Ovary (tissue), 10 donors: ENCODE measurements at regions of chr10 and their contacts with region 1.

Region 1: DNA sequence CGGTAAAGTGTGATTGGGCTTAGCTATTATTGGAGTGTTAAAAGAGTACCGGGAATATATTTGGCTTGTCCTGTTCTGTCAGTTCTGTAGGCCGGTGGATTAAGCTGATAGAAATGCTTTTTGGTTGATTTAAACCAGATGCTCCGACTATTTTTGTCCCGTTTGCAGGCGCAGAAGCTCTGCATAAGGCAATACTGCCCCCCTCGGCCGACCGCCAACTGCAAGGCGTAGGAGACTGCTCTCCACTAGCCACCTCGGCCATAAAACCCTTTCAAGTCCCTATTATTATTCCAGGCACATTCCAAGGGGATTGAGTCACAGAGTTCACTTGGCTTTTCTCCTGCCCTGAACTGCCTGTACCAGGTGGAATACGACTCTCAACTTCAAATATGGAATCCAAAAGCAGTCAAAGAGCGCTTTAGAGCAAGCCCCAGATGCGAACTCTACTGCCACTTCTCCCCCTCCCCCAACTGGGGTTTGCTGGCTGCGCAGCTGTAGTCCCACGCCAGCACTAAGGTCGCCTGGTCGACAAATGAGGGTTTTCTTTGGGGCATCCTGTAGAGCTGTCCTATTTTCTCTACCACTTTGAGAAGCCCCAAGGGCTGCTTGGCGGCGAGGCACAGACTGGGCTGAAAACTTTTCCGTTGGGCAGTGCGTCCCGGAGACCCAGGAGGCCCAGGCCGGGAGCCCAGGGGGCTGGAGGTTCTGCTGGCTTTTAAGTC is 108.3 kb downstream of the REEP3 start:
- DNase-seq: peak; percentile 93 to 97 (median 97)
- H3K4me3 ChIP-seq: peak overlapping the region; percentile 57
- H3K27ac ChIP-seq: peak overlapping the region; percentile 87 to 92
- H3K4me1 ChIP-seq: peaks cover 7% of the 10 kb centered on the region
- H3K27me3 ChIP-seq: no peaks in the 10 kb centered on the region
- CTCF ChIP-seq: peak; percentile 66 to 76 (median 70)
- EP300 ChIP-seq: no peak
- POLR2A ChIP-seq: no peak

Region 2: DNA sequence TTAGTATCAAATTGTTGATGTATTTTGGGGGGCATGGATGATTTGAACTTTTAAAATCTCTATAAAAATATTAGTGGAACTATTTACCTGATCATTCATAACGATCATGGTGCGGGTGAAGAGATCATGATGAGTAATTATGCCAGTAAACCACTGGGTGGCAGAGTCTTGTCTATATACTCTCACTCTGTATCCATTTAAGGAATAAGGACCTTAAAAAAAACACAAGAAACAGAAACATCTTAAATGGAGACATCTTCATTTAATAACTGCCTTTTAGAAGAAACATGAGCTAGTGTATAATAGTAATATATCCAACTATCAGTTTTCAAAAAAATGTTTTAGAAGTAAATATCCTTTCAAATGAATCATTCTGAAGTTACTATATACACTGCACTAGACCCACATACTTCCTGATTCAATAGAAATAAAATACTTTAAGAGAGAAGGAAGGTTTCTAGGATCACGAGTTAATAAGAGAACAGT is 412.4 kb before region 1 on chr10:
- intact Hi-C with region 1: loop called in 2 of 4 experiments (anchors 10 kb)
- DNase-seq: no peak
- H3K4me3 ChIP-seq: no peak overlapping the region
- H3K27ac ChIP-seq: no peak overlapping the region
- H3K4me1 ChIP-seq: no peaks in the 10 kb centered on the region
- H3K27me3 ChIP-seq: no peaks in the 10 kb centered on the region
- CTCF ChIP-seq: peak; percentile 17 to 74 (median 69)
- EP300 ChIP-seq: no peak
- POLR2A ChIP-seq: no peak

Region 3: DNA sequence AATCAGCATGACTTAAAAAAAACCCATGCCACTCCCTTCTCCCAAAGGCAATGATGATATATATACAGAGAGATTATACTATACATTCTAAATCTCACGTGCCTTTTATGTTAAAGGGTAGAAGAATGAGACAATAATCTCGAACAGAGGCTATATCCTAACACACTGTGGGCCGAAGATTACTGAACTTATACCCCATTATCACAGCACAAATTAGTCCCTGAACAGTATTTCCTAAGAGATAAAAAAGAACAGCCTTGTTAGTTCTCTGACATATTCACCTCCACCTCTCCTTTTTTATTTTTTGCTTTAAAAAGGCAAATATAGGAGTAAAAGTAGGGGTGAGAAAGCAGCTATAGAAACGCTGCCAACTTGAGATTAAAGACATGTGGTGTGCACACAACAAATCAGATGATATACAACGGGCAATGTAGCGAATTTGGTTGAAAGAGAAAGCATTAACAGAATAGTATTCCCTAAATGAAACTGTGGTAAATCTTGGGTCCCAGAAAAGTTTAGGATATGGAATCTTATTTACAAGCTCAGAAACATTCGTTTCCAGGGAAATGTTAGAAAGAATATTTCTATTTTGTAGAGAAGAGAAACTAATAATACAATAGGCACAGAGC is 233.3 kb before region 1 on chr10:
- intact Hi-C with region 1: no loop called
- DNase-seq: no peak
- H3K4me3 ChIP-seq: no peak overlapping the region
- H3K27ac ChIP-seq: no peak overlapping the region
- H3K4me1 ChIP-seq: no peaks in the 10 kb centered on the region
- H3K27me3 ChIP-seq: no peaks in the 10 kb centered on the region
- CTCF ChIP-seq: no peak
- EP300 ChIP-seq: no peak
- POLR2A ChIP-seq: no peak

Region 4: DNA sequence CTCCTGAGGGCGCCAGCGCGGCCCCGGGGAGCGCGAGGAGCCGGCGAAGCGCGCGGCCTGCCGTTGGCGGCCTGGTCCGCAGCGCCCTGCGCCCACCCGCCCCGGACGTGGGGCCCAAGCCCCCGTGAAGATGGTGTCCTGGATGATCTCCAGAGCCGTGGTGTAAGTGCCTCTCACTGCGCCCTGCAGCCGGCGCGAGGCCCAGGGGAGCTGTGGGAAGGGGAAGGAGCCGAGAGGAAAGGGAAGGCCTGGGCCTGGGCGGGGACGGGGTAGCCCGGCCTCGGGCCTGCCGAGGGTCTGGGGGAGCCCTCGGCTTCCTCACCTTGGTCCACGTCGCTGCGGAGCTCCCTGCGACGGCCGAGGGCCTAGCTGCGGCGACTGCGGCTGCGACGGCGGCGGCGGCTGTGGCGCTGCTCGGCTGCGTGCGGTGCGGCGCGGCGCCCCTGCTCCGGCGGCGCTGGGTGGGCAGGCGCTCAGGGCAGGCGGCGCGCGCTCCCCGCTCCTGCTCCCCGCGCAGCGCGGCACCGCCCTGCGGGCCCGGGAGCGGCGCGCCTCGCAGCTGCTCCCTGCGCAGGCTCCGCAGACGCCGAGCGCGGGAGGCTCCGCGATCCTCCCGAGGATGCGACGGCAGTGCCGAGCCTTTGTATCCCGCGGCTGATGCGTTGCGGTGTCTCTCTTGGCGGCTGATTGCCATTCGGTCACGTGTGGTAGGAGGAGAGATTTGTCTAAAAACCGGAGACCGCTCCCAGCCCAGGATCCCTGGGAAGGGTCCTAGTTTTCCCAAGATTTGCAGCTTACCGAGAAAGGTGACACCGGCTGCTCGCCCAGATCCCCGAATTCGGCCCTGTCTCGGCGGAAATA is 107.9 kb before region 1 on chr10:
- intact Hi-C with region 1: loop called in 2 of 4 experiments (anchors 2 kb)
- DNase-seq: peak; percentile 67 to 79 (median 73)
- H3K4me3 ChIP-seq: peak overlapping the region; percentile 75
- H3K27ac ChIP-seq: peak overlapping the region; percentile 96 to 99
- H3K4me1 ChIP-seq: peaks cover 3% of the 10 kb centered on the region
- H3K27me3 ChIP-seq: no peaks in the 10 kb centered on the region
- CTCF ChIP-seq: no peak
- EP300 ChIP-seq: no peak
- POLR2A ChIP-seq: peak; percentile 61

Region 5: DNA sequence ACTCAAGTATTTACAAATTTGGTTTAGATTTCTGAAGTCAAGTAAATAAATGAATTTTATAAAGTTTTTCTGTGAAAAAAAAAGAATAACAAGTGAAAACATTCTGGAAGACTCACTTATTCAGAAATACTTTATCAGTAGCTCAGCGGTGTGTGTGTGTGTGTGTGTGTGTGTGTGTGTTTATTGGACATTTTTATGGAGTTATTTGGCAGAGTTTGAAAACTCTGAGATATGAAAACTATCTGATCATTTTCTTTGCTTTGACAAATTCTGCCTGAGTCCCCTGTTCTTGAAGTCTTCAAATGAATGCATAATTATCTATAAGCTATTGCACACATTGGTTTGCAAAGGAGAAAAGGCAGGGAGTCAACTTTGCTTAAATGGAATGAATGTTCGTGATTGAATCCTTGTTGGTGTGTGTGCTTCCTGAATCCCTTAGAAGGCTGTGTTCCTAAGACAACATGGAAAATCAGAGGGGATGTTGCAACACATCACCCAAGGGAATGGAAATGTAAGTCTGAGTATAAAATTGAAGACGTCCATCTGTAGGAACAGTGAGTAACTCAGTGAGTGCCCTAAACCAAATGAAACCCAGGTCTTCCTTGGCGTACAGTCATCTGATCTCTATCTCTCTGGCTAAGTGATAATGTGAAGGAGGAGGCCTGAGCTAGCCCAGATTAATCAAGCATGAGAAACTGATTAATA is 52.6 kb after region 1 on chr10:
- intact Hi-C with region 1: no loop called
- DNase-seq: peak in 4 of 5 donors; percentile 24 to 72 (median 43)
- H3K4me3 ChIP-seq: no peak overlapping the region
- H3K27ac ChIP-seq: no peak overlapping the region
- H3K4me1 ChIP-seq: no peaks in the 10 kb centered on the region
- H3K27me3 ChIP-seq: no peaks in the 10 kb centered on the region
- CTCF ChIP-seq: no peak
- EP300 ChIP-seq: no peak
- POLR2A ChIP-seq: no peak

Region 6: GRCh38 chr10:63707254-63707910 is 77.9 kb after region 1 on chr10:
- intact Hi-C with region 1: loop called in 3 of 4 experiments (anchors 5 kb)
- DNase-seq: peak in 1 of 5 donors; percentile 42
- H3K4me3 ChIP-seq: no peak overlapping the region
- H3K27ac ChIP-seq: no peak overlapping the region
- H3K4me1 ChIP-seq: peaks cover 5% of the 10 kb centered on the region
- H3K27me3 ChIP-seq: no peaks in the 10 kb centered on the region
- CTCF ChIP-seq: no peak
- EP300 ChIP-seq: peak; percentile 91
- POLR2A ChIP-seq: no peak

Region 7: GRCh38 chr10:63767138-63767801 is 137.7 kb after region 1 on chr10:
- intact Hi-C with region 1: no loop called
- DNase-seq: no peak
- H3K4me3 ChIP-seq: no peak overlapping the region
- H3K27ac ChIP-seq: no peak overlapping the region
- H3K4me1 ChIP-seq: no peaks in the 10 kb centered on the region
- H3K27me3 ChIP-seq: no peaks in the 10 kb centered on the region
- CTCF ChIP-seq: peak in 1 of 3 donors; percentile 44
- EP300 ChIP-seq: no peak
- POLR2A ChIP-seq: no peak